ENCODE measurements at regions of chrX and their contacts with region 1.

Region 1: GRCh38 chrX:15749642-15750610 is 11.9 kb downstream of the CA5B start:
- DNase-seq: peak; percentile 13
- H3K4me3 Mint-ChIP-seq: peak overlapping the region; percentile 60
- H3K27ac Mint-ChIP-seq: peak overlapping the region; percentile 96
- H3K4me1 Mint-ChIP-seq: peaks cover 45% of the 10 kb centered on the region
- H3K27me3 Mint-ChIP-seq: no peaks in the 10 kb centered on the region

Region 2: GRCh38 chrX:15686818-15687685 is 62.9 kb before region 1 on chrX:
- intact Hi-C with region 1: loop called (anchors 1 kb)
- DNase-seq: peak; percentile 37
- H3K4me3 Mint-ChIP-seq: no peak overlapping the region
- H3K27ac Mint-ChIP-seq: no peak overlapping the region
- H3K4me1 Mint-ChIP-seq: peaks cover 4% of the 10 kb centered on the region
- H3K27me3 Mint-ChIP-seq: no peaks in the 10 kb centered on the region

Region 3: DNA sequence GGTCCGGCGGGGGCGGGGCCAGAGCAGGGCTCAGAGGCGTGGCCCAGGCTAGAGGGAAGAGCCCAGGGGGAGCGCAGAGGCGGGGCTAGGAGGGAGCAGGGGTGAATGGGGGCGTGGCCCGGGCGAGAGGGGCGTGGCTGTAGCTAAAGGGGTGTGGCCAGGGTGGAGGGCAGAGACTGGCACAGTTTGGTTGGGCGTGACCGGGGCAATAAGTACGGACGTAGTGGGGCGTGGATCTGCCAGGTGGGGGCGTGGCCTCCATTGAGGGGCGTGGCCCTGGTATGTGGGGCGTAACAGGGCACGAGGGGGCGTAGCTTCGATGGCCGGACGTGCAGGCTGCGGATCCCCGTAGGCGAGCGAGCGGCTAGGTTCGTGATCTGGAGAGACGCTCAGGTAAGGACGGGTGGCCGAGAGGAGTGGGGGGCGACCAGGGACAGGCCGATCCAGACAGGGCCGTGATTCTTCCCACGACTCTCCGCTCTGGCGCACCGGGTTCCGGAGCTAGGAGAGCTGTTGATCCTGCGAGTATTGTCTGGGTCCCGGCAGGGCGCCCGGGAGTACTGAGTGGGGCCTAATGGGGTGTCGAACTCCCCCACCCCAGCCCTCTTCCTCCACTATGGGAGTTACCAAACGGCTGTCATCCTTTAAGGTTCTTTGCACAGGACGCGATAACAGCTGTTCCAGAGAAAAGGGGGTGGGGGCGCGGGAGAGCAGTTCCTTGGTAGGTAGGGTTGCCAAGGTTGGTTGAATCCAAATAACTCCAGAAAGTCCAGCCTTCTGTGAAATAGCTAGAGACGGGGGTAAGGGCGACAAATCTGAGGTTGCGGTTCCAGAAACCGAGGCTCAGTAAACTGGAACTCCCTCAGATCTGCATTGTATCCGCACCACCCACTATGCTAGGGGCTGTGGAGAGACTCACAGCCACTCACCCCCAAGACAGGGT is 11.7 kb before region 1 on chrX and contains the start of gene CA5B:
- intact Hi-C with region 1: loop called (anchors 1 kb)
- DNase-seq: peak; percentile 94
- H3K4me3 Mint-ChIP-seq: peak within 1 kb of the TSS; percentile 82
- H3K27ac Mint-ChIP-seq: peak within 1 kb of the TSS; percentile 75
- H3K4me1 Mint-ChIP-seq: peaks cover 23% of the 10 kb centered on the region
- H3K27me3 Mint-ChIP-seq: no peaks in the 10 kb centered on the region
- total RNA-seq, gene CA5B: 5.2 and 8.0 TPM in 2 replicates

Region 4: DNA sequence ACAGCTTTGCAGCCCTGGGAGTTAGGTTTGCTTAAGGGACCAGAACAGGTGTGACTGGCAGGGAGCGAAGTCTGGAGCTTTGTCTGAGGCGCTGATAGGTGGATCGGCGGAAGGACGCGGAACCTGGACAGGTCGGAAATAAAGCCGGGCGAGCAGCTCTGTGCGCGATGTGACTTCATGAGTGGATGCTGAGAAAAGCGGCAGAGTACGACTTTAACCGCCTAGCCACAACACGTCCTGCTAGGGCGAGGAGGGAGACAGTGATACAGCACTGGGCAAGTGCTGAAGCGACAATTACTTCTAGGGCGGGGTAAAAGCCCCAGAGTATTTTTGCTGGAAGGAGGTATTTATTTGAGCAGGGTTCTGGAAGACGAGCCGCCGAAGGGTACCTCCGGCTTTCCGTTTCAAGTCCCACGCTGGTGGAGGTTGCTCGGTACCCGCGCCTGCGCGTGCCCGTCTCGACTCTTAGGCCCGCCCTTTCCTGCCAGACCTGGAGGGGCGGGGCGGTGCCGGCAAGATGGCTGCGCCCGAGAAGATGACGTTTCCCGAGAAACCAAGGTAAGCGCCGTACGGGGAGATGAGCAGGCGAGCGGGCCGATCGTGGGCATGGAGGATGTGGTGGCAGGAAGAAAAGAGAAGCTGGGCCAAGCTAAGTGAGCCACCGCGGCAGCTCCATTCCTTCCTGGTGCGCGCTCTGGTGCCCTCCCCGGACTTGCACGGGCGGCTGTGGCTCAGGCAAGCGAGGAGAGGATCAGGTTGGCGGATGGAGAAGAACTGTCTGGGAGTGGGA is 40.2 kb after region 1 on chrX and contains the start of gene ZRSR2:
- intact Hi-C with region 1: loop called (anchors 5 kb)
- DNase-seq: peak; percentile 83
- H3K4me3 Mint-ChIP-seq: no peak within 1 kb of the TSS
- H3K27ac Mint-ChIP-seq: no peak within 1 kb of the TSS
- H3K4me1 Mint-ChIP-seq: peaks cover 12% of the 10 kb centered on the region
- H3K27me3 Mint-ChIP-seq: no peaks in the 10 kb centered on the region
- total RNA-seq, gene ZRSR2: 18.7 and 20.3 TPM in 2 replicates

Region 5: DNA sequence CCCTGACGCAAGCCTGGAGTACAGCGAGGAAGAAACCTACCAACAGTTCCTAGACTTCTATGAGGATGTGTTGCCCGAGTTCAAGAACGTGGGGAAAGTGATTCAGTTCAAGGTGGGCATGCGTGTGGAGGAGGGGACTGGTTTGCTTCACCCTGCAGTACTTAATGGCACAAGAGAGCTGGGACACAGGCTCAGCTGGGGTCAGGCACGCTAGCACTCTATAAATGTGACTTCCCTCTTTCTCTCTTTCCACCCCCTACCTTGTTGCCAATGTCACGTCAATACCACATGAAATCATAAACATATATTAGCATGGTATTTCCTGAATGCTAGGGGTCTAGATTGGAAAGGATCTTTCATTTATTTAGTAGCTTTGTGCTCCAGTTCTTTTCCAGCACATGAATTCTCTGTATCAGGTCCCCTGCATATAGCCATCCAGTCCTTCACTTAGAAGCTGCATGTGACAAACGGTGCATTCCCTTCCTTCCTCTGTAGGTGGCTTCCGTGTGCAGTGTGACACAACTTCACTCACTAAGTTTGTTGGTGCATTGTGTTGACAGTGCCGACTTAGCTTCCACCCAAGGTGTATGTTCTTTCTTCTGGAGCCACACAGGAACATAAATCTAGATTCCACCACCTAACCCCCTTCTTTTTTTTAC is 66.0 kb after region 1 on chrX:
- intact Hi-C with region 1: loop called (anchors 5 kb)
- DNase-seq: peak; percentile 15
- H3K4me3 Mint-ChIP-seq: no peak overlapping the region
- H3K27ac Mint-ChIP-seq: peak overlapping the region; percentile 92
- H3K4me1 Mint-ChIP-seq: peaks cover 41% of the 10 kb centered on the region
- H3K27me3 Mint-ChIP-seq: no peaks in the 10 kb centered on the region

Region 6: GRCh38 chrX:16719334-16720084 is 969.6 kb after region 1 on chrX and contains the start of gene SYAP1:
- intact Hi-C with region 1: loop called (anchors 10 kb)
- DNase-seq: peak; percentile 88
- H3K4me3 Mint-ChIP-seq: peak within 1 kb of the TSS; percentile 90
- H3K27ac Mint-ChIP-seq: peak within 1 kb of the TSS; percentile 90
- H3K4me1 Mint-ChIP-seq: peaks cover 20% of the 10 kb centered on the region
- H3K27me3 Mint-ChIP-seq: no peaks in the 10 kb centered on the region
- total RNA-seq, gene SYAP1: 21.3 and 22.6 TPM in 2 replicates